B cell (primary cell): ENCODE measurements at regions of chr16 and their contacts with region 1.

Region 1: DNA sequence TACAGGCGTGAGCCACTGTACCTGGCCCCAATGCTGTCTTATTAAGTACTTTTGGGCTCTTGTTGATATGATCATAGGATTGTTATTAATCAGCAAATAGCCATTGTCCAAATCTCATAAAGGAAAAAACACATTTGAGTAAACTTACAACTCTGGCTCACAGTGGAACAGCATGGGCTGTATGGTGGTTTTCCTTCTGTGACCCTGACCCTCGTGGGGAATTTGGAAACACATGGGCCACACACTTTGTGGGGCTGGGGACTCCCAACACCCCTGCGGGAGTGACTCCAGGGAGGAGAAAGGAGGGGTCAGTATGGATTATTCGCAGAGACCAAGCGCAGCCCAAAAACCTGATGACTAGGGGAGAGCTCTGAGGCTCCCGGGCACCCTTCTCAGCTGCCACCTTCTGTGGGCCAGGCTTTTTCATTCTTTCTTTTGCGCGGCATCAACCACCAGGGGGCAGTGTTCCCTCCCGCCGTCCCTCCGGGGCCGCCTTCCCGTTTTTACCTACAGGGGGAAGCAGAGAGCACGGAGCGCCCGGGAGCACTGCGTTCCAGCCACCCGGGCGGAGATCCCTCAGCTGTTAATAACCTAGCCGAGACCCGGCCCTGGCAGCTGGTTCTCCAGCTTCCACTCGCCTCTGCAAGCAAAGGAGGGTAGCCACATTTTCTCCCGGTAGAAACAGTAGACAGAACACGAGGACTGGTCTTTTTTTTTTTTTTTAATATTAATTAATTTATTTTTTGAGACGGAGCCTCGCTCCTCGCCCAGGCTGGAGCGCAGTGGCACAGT is 9.7 kb downstream of the TSNAXIP1 start:
- DNase-seq: peak; percentile 92
- ATAC-seq: peak; percentile 99
- H3K4me3 ChIP-seq: no peak overlapping the region
- H3K4me3 Mint-ChIP-seq: peak overlapping the region; percentile 65
- H3K27ac ChIP-seq: no peak overlapping the region
- H3K27ac Mint-ChIP-seq: peak overlapping the region; percentile 59
- H3K4me1 ChIP-seq: peaks cover 0 to 7% of the 10 kb centered on the region in 2 donors
- H3K4me1 Mint-ChIP-seq: peaks cover 6% of the 10 kb centered on the region
- H3K27me3 ChIP-seq: no peaks in the 10 kb centered on the region
- H3K27me3 Mint-ChIP-seq: no peaks in the 10 kb centered on the region
- CTCF ChIP-seq: peak; percentile 100

Region 2: GRCh38 chr16:67719048-67719777 is 97.2 kb before region 1 on chr16 and contains the start of gene GFOD2:
- CTCF ChIA-PET with region 1: interaction called, 11 read pairs
- POLR2A ChIA-PET with region 1: no interaction called
- intact Hi-C with region 1: no loop called
- DNase-seq: peak; percentile 97
- ATAC-seq: peak; percentile 94
- H3K4me3 ChIP-seq: peak within 1 kb of the TSS; percentile 66 to 93 (median 87)
- H3K4me3 Mint-ChIP-seq: peak within 1 kb of the TSS; percentile 99
- H3K27ac ChIP-seq: peak within 1 kb of the TSS; percentile 89 to 93
- H3K27ac Mint-ChIP-seq: peak within 1 kb of the TSS; percentile 98
- H3K4me1 ChIP-seq: peaks cover 18 to 20% of the 10 kb centered on the region in 2 donors
- H3K4me1 Mint-ChIP-seq: peaks cover 38% of the 10 kb centered on the region
- H3K27me3 ChIP-seq: no peaks in the 10 kb centered on the region
- H3K27me3 Mint-ChIP-seq: no peaks in the 10 kb centered on the region
- CTCF ChIP-seq: no peak
- total RNA-seq, gene GFOD2: 18.1 and 18.2 TPM in 2 replicates

Region 3: DNA sequence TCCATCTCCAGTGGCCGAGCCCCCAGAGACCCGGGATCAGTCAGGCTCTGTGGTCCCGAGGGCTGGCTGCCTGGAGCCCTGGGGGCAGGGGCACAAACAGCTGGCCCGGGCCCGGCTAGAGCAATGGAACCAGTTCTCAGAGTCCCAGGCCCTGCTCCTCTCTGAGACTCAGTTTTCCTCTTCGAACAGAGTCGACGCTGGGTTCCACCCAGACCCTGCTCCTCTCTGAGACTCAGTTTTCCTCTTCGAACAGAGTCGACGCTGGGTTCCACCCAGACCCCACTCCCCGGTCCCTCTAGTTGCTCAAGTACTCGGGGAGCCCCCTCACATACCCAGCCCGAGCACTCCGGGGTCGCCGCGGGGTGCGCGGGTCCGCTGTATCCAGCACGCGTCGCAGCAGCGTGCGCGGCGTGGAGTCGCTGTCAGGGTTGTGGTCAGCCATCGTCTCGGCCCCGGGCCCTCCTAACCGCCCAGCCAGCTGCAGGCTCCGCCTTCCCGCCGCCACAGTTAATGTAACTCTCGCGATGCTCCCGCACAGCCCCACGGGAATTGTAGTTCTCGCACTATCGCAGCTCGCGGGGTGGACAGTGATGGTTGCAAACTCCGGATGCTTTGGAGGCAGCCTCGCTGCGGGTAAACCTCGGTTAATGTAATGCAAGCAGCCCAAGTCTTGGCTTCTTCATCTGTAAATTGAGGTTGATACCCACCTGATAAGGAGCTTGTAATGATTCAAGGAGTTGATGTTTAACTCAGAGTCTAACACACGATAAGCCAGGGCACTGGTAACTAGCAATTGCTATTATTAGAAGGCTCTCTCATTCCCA is 17.2 kb after region 1 on chr16:
- CTCF ChIA-PET with region 1: interaction called, 28 read pairs
- POLR2A ChIA-PET with region 1: interaction called, 3 read pairs
- intact Hi-C with region 1: loop called (anchors 2 kb)
- DNase-seq: peak; percentile 92
- ATAC-seq: peak; percentile 100
- H3K4me3 ChIP-seq: peak overlapping the region; percentile 47 to 76 (median 75)
- H3K4me3 Mint-ChIP-seq: peak overlapping the region; percentile 89
- H3K27ac ChIP-seq: peak overlapping the region in 1 of 2 donors; percentile 64
- H3K27ac Mint-ChIP-seq: peak overlapping the region; percentile 83
- H3K4me1 ChIP-seq: peaks cover 12 to 16% of the 10 kb centered on the region in 2 donors
- H3K4me1 Mint-ChIP-seq: peaks cover 16% of the 10 kb centered on the region
- H3K27me3 ChIP-seq: no peaks in the 10 kb centered on the region
- H3K27me3 Mint-ChIP-seq: no peaks in the 10 kb centered on the region
- CTCF ChIP-seq: no peak

Region 4: GRCh38 chr16:67928561-67929364 is 112.3 kb after region 1 on chr16:
- CTCF ChIA-PET with region 1: interaction called, 21 read pairs
- POLR2A ChIA-PET with region 1: no interaction called
- intact Hi-C with region 1: loop called (anchors 1 kb)
- DNase-seq: peak; percentile 79
- ATAC-seq: peak; percentile 82
- H3K4me3 ChIP-seq: no peak overlapping the region
- H3K4me3 Mint-ChIP-seq: no peak overlapping the region
- H3K27ac ChIP-seq: no peak overlapping the region
- H3K27ac Mint-ChIP-seq: peak overlapping the region; percentile 50
- H3K4me1 ChIP-seq: peaks cover 9 to 27% of the 10 kb centered on the region in 2 donors
- H3K4me1 Mint-ChIP-seq: peaks cover 26% of the 10 kb centered on the region
- H3K27me3 ChIP-seq: no peaks in the 10 kb centered on the region
- H3K27me3 Mint-ChIP-seq: no peaks in the 10 kb centered on the region
- CTCF ChIP-seq: peak; percentile 77

Region 5: GRCh38 chr16:68229431-68230198 is 413.2 kb after region 1 on chr16:
- CTCF ChIA-PET with region 1: interaction called, 43 read pairs
- POLR2A ChIA-PET with region 1: no interaction called
- intact Hi-C with region 1: no loop called
- DNase-seq: peak; percentile 70
- ATAC-seq: peak; percentile 53
- H3K4me3 ChIP-seq: no peak overlapping the region
- H3K4me3 Mint-ChIP-seq: no peak overlapping the region
- H3K27ac ChIP-seq: no peak overlapping the region
- H3K27ac Mint-ChIP-seq: peak overlapping the region; percentile 82
- H3K4me1 ChIP-seq: peaks cover 27 to 28% of the 10 kb centered on the region in 2 donors
- H3K4me1 Mint-ChIP-seq: peaks cover 46% of the 10 kb centered on the region
- H3K27me3 ChIP-seq: no peaks in the 10 kb centered on the region
- H3K27me3 Mint-ChIP-seq: no peaks in the 10 kb centered on the region
- CTCF ChIP-seq: peak; percentile 96